Breast epithelium (tissue), 4 donors: ENCODE measurements at regions of chr2 and their contacts with region 1.

Region 1: GRCh38 chr2:9497017-9497416 is 22.7 kb downstream of the IAH1 start:
- DNase-seq: no peak
- H3K4me3 ChIP-seq: no peak overlapping the region
- H3K27ac ChIP-seq: peak overlapping the region in 1 of 2 donors; percentile 48
- H3K4me1 ChIP-seq: no peaks in the 10 kb centered on the region
- H3K27me3 ChIP-seq: no peaks in the 10 kb centered on the region
- CTCF ChIP-seq: no peak
- POLR2A ChIP-seq: no peak

Region 2: GRCh38 chr2:9463698-9464034 is 33.4 kb before region 1 on chr2:
- intact Hi-C with region 1: no loop called
- DNase-seq: no peak
- H3K4me3 ChIP-seq: no peak overlapping the region
- H3K27ac ChIP-seq: no peak overlapping the region
- H3K4me1 ChIP-seq: no peaks in the 10 kb centered on the region
- H3K27me3 ChIP-seq: no peaks in the 10 kb centered on the region
- CTCF ChIP-seq: no peak
- POLR2A ChIP-seq: no peak

Region 3: DNA sequence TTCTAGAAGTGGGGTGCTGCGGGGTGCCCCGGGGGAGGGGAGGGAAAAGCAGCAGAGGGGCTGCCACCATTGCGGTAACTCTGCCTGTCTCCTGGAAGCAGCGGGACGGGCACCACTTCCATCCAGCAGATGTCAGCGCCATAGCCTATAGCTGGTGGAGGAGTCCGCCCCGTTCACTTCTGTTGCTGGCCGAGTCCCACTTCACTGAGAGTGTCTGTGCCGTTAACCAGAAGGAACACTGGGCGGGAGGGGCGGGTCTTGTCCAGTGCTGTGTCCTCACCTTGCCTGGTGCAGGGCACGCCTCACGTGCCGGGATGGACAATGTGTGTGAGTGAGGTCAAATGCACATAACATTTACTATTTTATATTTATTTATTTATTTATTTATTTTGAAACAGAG is 970.4 kb after region 1 on chr2:
- intact Hi-C with region 1: loop called (anchors 5 kb)
- DNase-seq: no peak
- H3K4me3 ChIP-seq: no peak overlapping the region
- H3K27ac ChIP-seq: no peak overlapping the region
- H3K4me1 ChIP-seq: no peaks in the 10 kb centered on the region
- H3K27me3 ChIP-seq: peaks cover 0 to 9% of the 10 kb centered on the region in 2 donors
- CTCF ChIP-seq: no peak
- POLR2A ChIP-seq: no peak